Activated CD4-positive, alpha-beta T cell treated with anti-CD3 and anti-CD28 coated beads, Interleukin-2, amount 10 ng/mL, durations not matched to agents 7 days and 5 days (primary cell): ENCODE measurements at regions of chr4 and their contacts with region 1.

Region 1: DNA sequence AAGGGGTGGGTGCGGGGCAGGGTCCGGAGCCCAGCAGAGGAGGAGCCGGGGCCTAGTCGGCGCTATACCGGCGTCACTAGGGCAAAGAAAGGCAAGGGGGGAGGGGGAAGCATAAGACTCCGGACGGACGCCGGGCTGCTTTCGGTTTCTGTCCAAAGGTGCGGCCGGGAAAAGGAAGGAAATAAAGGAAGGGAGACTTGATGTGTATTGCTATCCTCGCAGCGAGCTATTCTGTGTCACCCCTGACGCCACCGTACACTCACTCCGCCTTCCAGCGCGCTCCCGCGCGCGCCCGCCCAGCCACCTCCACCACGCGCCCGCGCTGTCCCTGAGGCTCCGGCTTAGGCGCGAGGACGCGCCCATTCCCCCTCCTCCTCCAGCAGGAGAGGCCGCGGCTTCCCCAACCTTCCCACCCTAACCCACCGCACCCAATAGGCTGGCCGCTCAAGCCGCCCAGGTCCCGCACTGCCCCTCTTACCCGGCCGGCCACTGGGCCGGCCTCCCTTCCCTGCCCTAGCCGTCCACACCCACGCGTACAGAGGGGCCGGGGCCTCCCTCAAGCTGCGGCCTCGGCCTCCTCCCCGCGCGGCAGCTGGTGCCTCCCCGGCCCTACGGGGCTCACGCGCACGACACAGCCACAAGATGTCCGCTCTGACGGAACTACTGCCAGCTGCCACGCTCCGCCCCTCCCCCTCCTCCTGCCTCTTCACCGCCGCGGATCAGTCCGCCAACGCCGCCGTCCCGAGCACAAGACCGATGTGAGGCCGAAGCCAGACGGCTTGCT is at the start of gene UBE2D3:
- DNase-seq: peak; percentile 93
- H3K4me3 Mint-ChIP-seq: no peak within 1 kb of the TSS
- H3K27ac Mint-ChIP-seq: no peak within 1 kb of the TSS
- H3K4me1 Mint-ChIP-seq: peaks cover 38% of the 10 kb centered on the region
- H3K27me3 Mint-ChIP-seq: no peaks in the 10 kb centered on the region
- total RNA-seq, gene UBE2D3: 360 to 500 TPM

Region 2: DNA sequence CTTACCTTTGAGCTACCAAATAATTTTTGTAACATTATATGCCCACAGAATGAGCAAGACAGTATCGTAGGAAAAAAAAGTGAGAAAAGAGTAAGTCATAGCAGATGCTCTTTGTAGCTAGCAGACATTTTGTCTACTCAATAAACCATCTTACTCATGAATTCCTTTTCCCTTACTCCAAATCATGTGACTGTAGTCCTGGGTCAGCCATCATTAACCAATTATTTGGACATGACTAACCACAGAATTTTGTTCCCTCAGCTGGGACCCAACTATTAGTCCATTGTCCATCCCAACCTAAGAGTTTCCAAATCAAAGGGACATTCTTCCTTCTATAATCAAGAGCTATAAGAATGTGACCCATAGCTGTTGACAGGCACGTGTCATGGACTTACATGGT is 11.1 kb before region 1 on chr4:
- CTCF ChIA-PET with region 1: interaction called, 11 read pairs
- POLR2A ChIA-PET with region 1: no interaction called
- DNase-seq: no peak
- H3K4me3 Mint-ChIP-seq: no peak overlapping the region
- H3K27ac Mint-ChIP-seq: no peak overlapping the region
- H3K4me1 Mint-ChIP-seq: peaks cover 84% of the 10 kb centered on the region
- H3K27me3 Mint-ChIP-seq: no peaks in the 10 kb centered on the region

Region 3: GRCh38 chr4:102847687-102848086 is 20.6 kb after region 1 on chr4:
- CTCF ChIA-PET with region 1: no interaction called
- POLR2A ChIA-PET with region 1: no interaction called
- DNase-seq: no peak
- H3K4me3 Mint-ChIP-seq: no peak overlapping the region
- H3K27ac Mint-ChIP-seq: no peak overlapping the region
- H3K4me1 Mint-ChIP-seq: peaks cover 6% of the 10 kb centered on the region
- H3K27me3 Mint-ChIP-seq: no peaks in the 10 kb centered on the region

Region 4: GRCh38 chr4:102868781-102869568 is 41.9 kb after region 1 on chr4 and contains the start of gene CISD2:
- CTCF ChIA-PET with region 1: interaction called, 10 read pairs
- POLR2A ChIA-PET with region 1: interaction called, 51 read pairs
- DNase-seq: peak; percentile 93
- H3K4me3 Mint-ChIP-seq: peak within 1 kb of the TSS; percentile 96
- H3K27ac Mint-ChIP-seq: peak within 1 kb of the TSS; percentile 100
- H3K4me1 Mint-ChIP-seq: peaks cover 61% of the 10 kb centered on the region
- H3K27me3 Mint-ChIP-seq: no peaks in the 10 kb centered on the region
- total RNA-seq, gene CISD2: 35.1 to 40.7 TPM